ENCODE measurements at regions of chr19 and their contacts with region 1.

Region 1: DNA sequence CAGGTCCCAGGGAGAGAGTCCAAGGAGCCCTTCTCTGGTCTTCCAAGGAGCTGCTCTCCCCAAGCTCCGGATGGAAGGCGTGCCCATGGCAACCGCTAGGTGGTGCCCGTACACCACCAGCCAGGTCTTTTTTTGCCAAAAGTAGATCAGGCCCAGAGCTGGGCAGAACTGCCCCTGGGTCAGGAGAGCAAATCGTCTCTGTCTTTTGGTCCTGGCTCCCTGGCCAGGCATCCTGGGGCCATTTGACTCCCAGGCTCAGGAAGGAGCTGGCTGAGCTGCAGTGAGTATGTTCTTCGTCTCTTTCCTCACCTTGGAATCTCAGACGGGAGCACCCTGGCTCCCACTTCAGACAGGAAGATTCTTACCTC is 24.6 kb upstream of the BCL3 start:
- DNase-seq: peak; percentile 64 to 84 (median 76)
- ATAC-seq: peak; percentile 93
- H3K4me3 ChIP-seq: no peak overlapping the region
- H3K4me3 Mint-ChIP-seq: peak overlapping the region in 1 of 10 donors; percentile 60
- H3K27ac ChIP-seq: no peak overlapping the region
- H3K27ac Mint-ChIP-seq: peak overlapping the region in 5 of 9 donors; percentile 26 to 79 (median 61)
- H3K4me1 ChIP-seq: peaks cover 0 to 10% of the 10 kb centered on the region in 2 donors
- H3K4me1 Mint-ChIP-seq: peaks cover 8 to 62% (median 24%) of the 10 kb centered on the region in 7 donors
- H3K27me3 ChIP-seq: no peaks in the 10 kb centered on the region
- H3K27me3 Mint-ChIP-seq: peaks cover 0 to 4% (median 0%) of the 10 kb centered on the region in 5 donors

Region 2: GRCh38 chr19:44107751-44108150 is 616.2 kb before region 1 on chr19:
- CTCF ChIA-PET with region 1: no interaction called
- POLR2A ChIA-PET with region 1: no interaction called
- intact Hi-C with region 1: no loop called
- DNase-seq: no peak
- ATAC-seq: no peak
- H3K4me3 ChIP-seq: no peak overlapping the region
- H3K4me3 Mint-ChIP-seq: no peak overlapping the region
- H3K27ac ChIP-seq: no peak overlapping the region
- H3K27ac Mint-ChIP-seq: no peak overlapping the region
- H3K4me1 ChIP-seq: peaks cover 0 to 7% of the 10 kb centered on the region in 2 donors
- H3K4me1 Mint-ChIP-seq: peaks cover 3 to 12% (median 8%) of the 10 kb centered on the region in 7 donors
- H3K27me3 ChIP-seq: no peaks in the 10 kb centered on the region
- H3K27me3 Mint-ChIP-seq: no peaks in the 10 kb centered on the region

Region 3: GRCh38 chr19:44746946-44747738 is 23.2 kb after region 1 on chr19:
- CTCF ChIA-PET with region 1: interaction called, 10 read pairs
- POLR2A ChIA-PET with region 1: interaction called, 5 read pairs
- intact Hi-C with region 1: loop called (anchors 1 kb)
- DNase-seq: peak; percentile 51 to 97 (median 61)
- ATAC-seq: peak; percentile 83
- H3K4me3 ChIP-seq: peak overlapping the region; percentile 91
- H3K4me3 Mint-ChIP-seq: peak overlapping the region; percentile 90 to 99 (median 92)
- H3K27ac ChIP-seq: peak overlapping the region; percentile 97
- H3K27ac Mint-ChIP-seq: peak overlapping the region; percentile 87 to 99 (median 94)
- H3K4me1 ChIP-seq: peaks cover 23 to 33% of the 10 kb centered on the region in 2 donors
- H3K4me1 Mint-ChIP-seq: peaks cover 35 to 56% (median 55%) of the 10 kb centered on the region in 7 donors
- H3K27me3 ChIP-seq: no peaks in the 10 kb centered on the region
- H3K27me3 Mint-ChIP-seq: peaks cover 0 to 3% (median 0%) of the 10 kb centered on the region in 5 donors

Region 4: DNA sequence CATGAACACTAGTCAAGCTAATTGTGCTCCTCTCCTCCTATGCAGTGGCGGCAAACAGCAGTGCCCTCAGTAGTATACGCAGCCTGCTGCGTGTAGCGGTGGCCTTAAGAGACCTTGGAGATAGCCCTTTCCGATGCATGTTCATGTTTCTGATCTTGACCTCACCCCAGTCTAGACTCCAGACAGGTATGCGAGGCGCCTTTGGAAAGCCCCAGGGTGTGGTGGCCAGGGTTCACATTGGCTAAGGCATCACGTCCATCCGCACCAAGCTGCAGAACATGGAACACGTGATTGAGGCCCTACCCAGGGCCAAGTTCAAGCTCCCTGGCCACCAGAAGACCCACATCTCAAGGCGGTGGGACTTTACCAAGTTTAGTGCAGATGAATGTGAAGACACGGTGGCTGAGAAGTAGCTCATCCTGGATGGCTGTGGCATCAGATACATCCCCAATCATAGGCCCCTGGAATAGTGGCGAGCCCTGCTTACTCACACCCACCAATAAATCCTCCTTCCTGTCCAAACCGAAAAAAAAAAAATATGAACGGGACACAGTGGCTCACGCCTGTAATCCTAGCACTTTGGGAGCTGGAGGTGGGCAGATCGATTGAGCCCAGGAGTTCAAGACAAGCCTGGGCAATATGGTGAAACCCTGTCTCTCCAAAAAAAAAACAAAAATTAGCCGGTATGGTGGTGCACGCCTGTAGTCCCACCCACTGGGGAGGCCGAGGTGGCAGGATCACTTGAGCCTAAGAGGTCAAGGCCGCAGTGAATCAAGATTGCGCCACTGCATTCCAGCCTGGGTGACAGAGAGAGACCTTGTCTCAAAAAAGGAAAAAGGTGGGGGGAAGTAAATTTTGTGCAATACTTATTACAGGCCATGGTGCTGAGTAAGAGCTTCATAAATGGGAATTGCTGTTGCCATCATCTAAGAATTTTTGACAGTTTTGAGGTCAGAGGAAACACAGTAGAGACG is 41.3 kb after region 1 on chr19:
- CTCF ChIA-PET with region 1: interaction called, 295 read pairs
- POLR2A ChIA-PET with region 1: interaction called, 23 read pairs
- intact Hi-C with region 1: loop called (anchors 1 kb)
- DNase-seq: no peak
- ATAC-seq: peak; percentile 5
- H3K4me3 ChIP-seq: no peak overlapping the region
- H3K4me3 Mint-ChIP-seq: no peak overlapping the region
- H3K27ac ChIP-seq: no peak overlapping the region
- H3K27ac Mint-ChIP-seq: peak overlapping the region in 5 of 9 donors; percentile 3 to 62 (median 52)
- H3K4me1 ChIP-seq: peaks cover 6 to 11% of the 10 kb centered on the region in 2 donors
- H3K4me1 Mint-ChIP-seq: peaks cover 1 to 60% (median 43%) of the 10 kb centered on the region in 7 donors
- H3K27me3 ChIP-seq: no peaks in the 10 kb centered on the region
- H3K27me3 Mint-ChIP-seq: no peaks in the 10 kb centered on the region

Region 5: GRCh38 chr19:44960906-44961728 is 237.2 kb after region 1 on chr19:
- CTCF ChIA-PET with region 1: no interaction called
- POLR2A ChIA-PET with region 1: no interaction called
- intact Hi-C with region 1: no loop called
- DNase-seq: no peak
- ATAC-seq: no peak
- H3K4me3 ChIP-seq: no peak overlapping the region
- H3K4me3 Mint-ChIP-seq: no peak overlapping the region
- H3K27ac ChIP-seq: no peak overlapping the region
- H3K27ac Mint-ChIP-seq: peak overlapping the region in 4 of 9 donors; percentile 11 to 49 (median 30)
- H3K4me1 ChIP-seq: peaks cover 9 to 12% of the 10 kb centered on the region in 2 donors
- H3K4me1 Mint-ChIP-seq: peaks cover 29 to 52% (median 42%) of the 10 kb centered on the region in 7 donors
- H3K27me3 ChIP-seq: no peaks in the 10 kb centered on the region
- H3K27me3 Mint-ChIP-seq: no peaks in the 10 kb centered on the region